Endothelial cell of umbilical vein (primary cell): ENCODE measurements at regions of chrX and their contacts with region 1.

Region 1: GRCh38 chrX:133670383-133670782 is 255.1 kb upstream of the GPC4 start:
- DNase-seq: peak; percentile 13
- H3K4me3 ChIP-seq: no peak overlapping the region
- H3K27ac ChIP-seq: no peak overlapping the region
- H3K4me1 ChIP-seq: no peaks in the 10 kb centered on the region
- H3K27me3 ChIP-seq: no peaks in the 10 kb centered on the region
- CTCF ChIP-seq: peak; percentile 15 to 16
- POLR2A ChIP-seq: no peak

Region 2: GRCh38 chrX:132226169-132226568 is 1444.2 kb before region 1 on chrX:
- CTCF ChIA-PET with region 1: interaction called, 10 read pairs
- POLR2A ChIA-PET with region 1: no interaction called
- dilution Hi-C with region 1: no loop called
- intact Hi-C with region 1: no loop called
- DNase-seq: no peak
- H3K4me3 ChIP-seq: no peak overlapping the region
- H3K27ac ChIP-seq: no peak overlapping the region
- H3K4me1 ChIP-seq: no peaks in the 10 kb centered on the region
- H3K27me3 ChIP-seq: no peaks in the 10 kb centered on the region
- CTCF ChIP-seq: peak in 1 of 2 donors; percentile 14
- POLR2A ChIP-seq: no peak

Region 3: GRCh38 chrX:132631579-132632232 is 1038.7 kb before region 1 on chrX:
- CTCF ChIA-PET with region 1: interaction called, 13 read pairs
- POLR2A ChIA-PET with region 1: no interaction called
- dilution Hi-C with region 1: no loop called
- intact Hi-C with region 1: loop called (anchors 2 kb)
- DNase-seq: peak; percentile 33
- H3K4me3 ChIP-seq: no peak overlapping the region
- H3K27ac ChIP-seq: no peak overlapping the region
- H3K4me1 ChIP-seq: no peaks in the 10 kb centered on the region
- H3K27me3 ChIP-seq: no peaks in the 10 kb centered on the region
- CTCF ChIP-seq: peak; percentile 27 to 30
- POLR2A ChIP-seq: no peak

Region 4: DNA sequence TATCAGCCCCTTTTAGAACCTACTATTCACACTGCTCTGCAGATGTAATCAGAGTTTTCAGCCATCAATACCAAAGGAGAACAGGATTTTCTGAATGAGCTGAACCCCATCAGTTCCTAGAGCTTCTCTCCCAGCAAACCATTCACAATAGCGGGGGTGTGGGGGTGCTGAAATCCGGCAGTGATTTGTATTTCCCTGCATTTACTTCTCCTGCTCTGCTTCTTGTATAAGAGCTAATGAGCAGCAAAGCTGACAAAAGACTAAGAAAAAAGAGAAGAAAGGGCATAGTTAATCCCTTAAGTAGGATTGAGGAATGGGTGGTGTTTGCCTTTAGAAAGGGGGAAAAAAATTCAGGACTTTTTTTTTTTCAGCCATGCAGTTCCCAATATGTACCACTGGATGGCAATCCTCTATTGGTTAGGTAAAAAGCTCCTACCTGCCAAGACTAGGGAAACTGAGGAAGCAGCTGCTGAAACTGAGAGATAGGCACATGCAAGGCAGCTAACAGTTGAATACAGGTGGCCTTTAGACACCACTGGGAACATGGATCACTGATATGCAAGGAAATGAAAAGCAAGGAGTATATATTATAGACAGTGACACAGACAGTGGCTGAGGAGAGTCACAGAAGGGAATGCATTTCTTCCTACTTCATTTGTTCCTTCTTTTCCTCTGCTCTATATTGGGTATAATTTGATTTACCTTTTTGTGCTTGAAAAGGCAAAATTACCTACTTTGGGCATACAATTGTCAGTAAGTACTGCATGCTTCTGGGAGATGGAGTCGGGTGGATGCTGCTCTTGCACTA is 929.9 kb before region 1 on chrX:
- CTCF ChIA-PET with region 1: interaction called, 11 read pairs
- POLR2A ChIA-PET with region 1: no interaction called
- dilution Hi-C with region 1: no loop called
- intact Hi-C with region 1: no loop called
- DNase-seq: peak; percentile 14
- H3K4me3 ChIP-seq: no peak overlapping the region
- H3K27ac ChIP-seq: no peak overlapping the region
- H3K4me1 ChIP-seq: no peaks in the 10 kb centered on the region
- H3K27me3 ChIP-seq: no peaks in the 10 kb centered on the region
- CTCF ChIP-seq: peak; percentile 26 to 54
- POLR2A ChIP-seq: no peak

Region 5: GRCh38 chrX:133005066-133005465 is 665.3 kb before region 1 on chrX:
- CTCF ChIA-PET with region 1: interaction called, 6 read pairs
- POLR2A ChIA-PET with region 1: no interaction called
- dilution Hi-C with region 1: no loop called
- intact Hi-C with region 1: loop called (anchors 2 kb)
- DNase-seq: peak; percentile 3
- H3K4me3 ChIP-seq: no peak overlapping the region
- H3K27ac ChIP-seq: no peak overlapping the region
- H3K4me1 ChIP-seq: no peaks in the 10 kb centered on the region
- H3K27me3 ChIP-seq: no peaks in the 10 kb centered on the region
- CTCF ChIP-seq: peak; percentile 30 to 40
- POLR2A ChIP-seq: no peak

Region 6: DNA sequence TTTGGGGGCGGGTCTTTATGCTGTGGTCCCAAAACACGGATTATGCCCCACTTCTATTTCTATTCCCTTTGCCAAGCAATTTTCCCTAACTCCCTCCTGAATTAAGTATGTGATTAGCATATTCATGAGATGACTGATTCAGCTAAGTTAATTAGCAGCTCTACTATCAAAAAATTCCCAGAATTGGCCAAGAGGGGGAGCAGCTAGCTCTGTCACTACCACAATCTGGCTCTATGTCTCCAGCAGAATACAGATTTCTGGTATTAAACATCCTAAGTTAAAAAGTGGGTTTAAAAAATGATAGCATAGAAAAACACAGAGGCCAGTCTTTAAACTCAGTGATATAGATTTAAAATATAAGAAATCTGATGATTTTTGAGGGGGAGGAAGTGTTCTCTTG is 335.4 kb before region 1 on chrX:
- CTCF ChIA-PET with region 1: no interaction called
- POLR2A ChIA-PET with region 1: no interaction called
- dilution Hi-C with region 1: no loop called
- intact Hi-C with region 1: loop called (anchors 2 kb)
- DNase-seq: no peak
- H3K4me3 ChIP-seq: no peak overlapping the region
- H3K27ac ChIP-seq: no peak overlapping the region
- H3K4me1 ChIP-seq: no peaks in the 10 kb centered on the region
- H3K27me3 ChIP-seq: no peaks in the 10 kb centered on the region
- CTCF ChIP-seq: peak in 1 of 2 donors; percentile 4
- POLR2A ChIP-seq: no peak

Region 7: DNA sequence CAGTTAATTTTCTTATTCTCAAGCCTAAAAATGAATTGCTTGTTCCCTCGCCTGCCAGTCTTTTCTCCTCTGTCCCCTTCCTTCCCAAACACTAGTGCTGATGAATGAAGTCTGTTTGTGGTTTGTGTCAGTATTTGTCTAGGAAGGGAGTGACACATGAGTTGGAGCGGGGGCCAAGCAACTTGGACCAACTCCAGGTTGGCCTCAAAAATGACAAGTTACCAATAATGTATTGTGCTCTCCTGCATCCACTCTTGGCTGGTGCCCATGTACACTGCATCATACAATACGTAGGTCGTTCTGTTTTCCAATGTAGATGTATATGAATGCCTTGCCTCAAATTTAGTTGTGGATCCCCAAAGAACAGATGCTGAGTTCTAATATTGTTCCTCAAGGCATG is 32.1 kb before region 1 on chrX:
- CTCF ChIA-PET with region 1: no interaction called
- POLR2A ChIA-PET with region 1: no interaction called
- dilution Hi-C with region 1: no loop called
- intact Hi-C with region 1: no loop called
- DNase-seq: no peak
- H3K4me3 ChIP-seq: no peak overlapping the region
- H3K27ac ChIP-seq: no peak overlapping the region
- H3K4me1 ChIP-seq: no peaks in the 10 kb centered on the region
- H3K27me3 ChIP-seq: no peaks in the 10 kb centered on the region
- CTCF ChIP-seq: no peak
- POLR2A ChIP-seq: no peak